ENCODE measurements at regions of chr2 and their contacts with region 1.

Region 1: GRCh38 chr2:27428213-27428977 is at the start of gene NRBP1:
- DNase-seq: peak; percentile 92 to 97
- ATAC-seq: peak; percentile 94 to 97 (median 95)
- H3K4me3 ChIP-seq: peak within 1 kb of the TSS; percentile 87
- H3K27ac ChIP-seq: peak within 1 kb of the TSS; percentile 98
- H3K4me1 ChIP-seq: peaks cover 41% of the 10 kb centered on the region
- H3K27me3 ChIP-seq: no peaks in the 10 kb centered on the region
- CTCF ChIP-seq: no peak
- total RNA-seq, gene NRBP1: 83.8 to 138 (median 103) TPM

Region 2: GRCh38 chr2:27356382-27357181 is 71.8 kb before region 1 on chr2 and contains the start of gene GTF3C2:
- intact Hi-C with region 1: loop called in 1 of 2 experiments (anchors 2 kb)
- DNase-seq: peak; percentile 95 to 98
- ATAC-seq: peak; percentile 93 to 96 (median 94)
- H3K4me3 ChIP-seq: peak within 1 kb of the TSS; percentile 95
- H3K27ac ChIP-seq: peak within 1 kb of the TSS; percentile 98
- H3K4me1 ChIP-seq: peaks cover 48% of the 10 kb centered on the region
- H3K27me3 ChIP-seq: no peaks in the 10 kb centered on the region
- CTCF ChIP-seq: no peak
- total RNA-seq, gene GTF3C2: 17.5 to 44.9 (median 31.1) TPM

Region 3: GRCh38 chr2:27409321-27410073 is 18.9 kb before region 1 on chr2 and contains the start of gene PPM1G:
- intact Hi-C with region 1: loop called (anchors 2 kb)
- DNase-seq: peak; percentile 95 to 98
- ATAC-seq: peak; percentile 99
- H3K4me3 ChIP-seq: peak within 1 kb of the TSS; percentile 98
- H3K27ac ChIP-seq: peak within 1 kb of the TSS; percentile 97
- H3K4me1 ChIP-seq: peaks cover 24% of the 10 kb centered on the region
- H3K27me3 ChIP-seq: no peaks in the 10 kb centered on the region
- CTCF ChIP-seq: no peak
- total RNA-seq, gene PPM1G: 44.0 to 83.6 (median 68.4) TPM

Region 4: DNA sequence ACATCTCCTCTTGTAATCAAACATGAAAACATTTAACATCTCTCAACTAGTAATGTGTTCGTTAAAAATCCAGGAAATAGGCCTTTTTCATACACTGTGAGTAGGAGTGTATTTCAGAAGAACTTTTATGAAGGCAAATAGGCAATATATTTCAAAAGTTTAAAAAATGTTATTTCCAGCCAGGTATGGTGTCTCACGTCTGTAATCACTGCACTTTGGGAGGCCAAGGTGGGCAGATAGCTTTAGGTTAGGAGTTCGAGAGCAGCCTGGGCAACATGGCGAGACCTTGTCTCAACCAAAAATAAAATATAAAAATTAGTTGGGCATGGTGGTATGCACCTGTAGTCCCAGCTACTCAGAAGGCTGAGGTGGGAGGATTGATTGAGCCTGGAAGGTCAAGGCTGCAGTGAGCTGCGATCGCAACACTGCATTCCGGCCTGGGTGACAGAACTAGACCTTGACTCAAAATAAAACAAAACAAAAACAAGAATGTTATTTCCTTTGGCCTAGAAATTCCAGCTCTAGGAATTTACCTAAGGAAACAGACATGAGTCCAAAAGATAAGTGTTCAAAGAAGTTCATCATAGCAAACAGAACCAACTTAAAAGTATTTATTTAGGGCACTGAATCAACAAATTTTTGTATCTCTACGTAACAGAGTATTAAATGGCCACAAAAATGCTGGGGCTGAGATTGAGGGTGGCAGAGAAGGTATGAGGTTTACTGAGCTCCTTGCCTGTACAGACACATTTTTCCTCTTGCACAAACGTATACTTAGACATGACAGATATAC is 446.9 kb after region 1 on chr2:
- intact Hi-C with region 1: no loop called
- DNase-seq: no peak
- ATAC-seq: no peak
- H3K4me3 ChIP-seq: no peak overlapping the region
- H3K27ac ChIP-seq: no peak overlapping the region
- H3K4me1 ChIP-seq: no peaks in the 10 kb centered on the region
- H3K27me3 ChIP-seq: no peaks in the 10 kb centered on the region
- CTCF ChIP-seq: no peak